Calu3 (cell line): ENCODE measurements at regions of chr10 and their contacts with region 1.

Region 1: GRCh38 chr10:92689663-92690210 is at the start of gene HHEX:
- DNase-seq: peak; percentile 76
- H3K4me3 Mint-ChIP-seq: peak within 1 kb of the TSS; percentile 98
- H3K27ac Mint-ChIP-seq: peak within 1 kb of the TSS; percentile 96
- H3K4me1 Mint-ChIP-seq: peaks cover 7% of the 10 kb centered on the region
- H3K27me3 Mint-ChIP-seq: no peaks in the 10 kb centered on the region
- CTCF ChIP-seq: no peak
- total RNA-seq, gene HHEX: 91.5 and 97.7 TPM in 2 replicates

Region 2: DNA sequence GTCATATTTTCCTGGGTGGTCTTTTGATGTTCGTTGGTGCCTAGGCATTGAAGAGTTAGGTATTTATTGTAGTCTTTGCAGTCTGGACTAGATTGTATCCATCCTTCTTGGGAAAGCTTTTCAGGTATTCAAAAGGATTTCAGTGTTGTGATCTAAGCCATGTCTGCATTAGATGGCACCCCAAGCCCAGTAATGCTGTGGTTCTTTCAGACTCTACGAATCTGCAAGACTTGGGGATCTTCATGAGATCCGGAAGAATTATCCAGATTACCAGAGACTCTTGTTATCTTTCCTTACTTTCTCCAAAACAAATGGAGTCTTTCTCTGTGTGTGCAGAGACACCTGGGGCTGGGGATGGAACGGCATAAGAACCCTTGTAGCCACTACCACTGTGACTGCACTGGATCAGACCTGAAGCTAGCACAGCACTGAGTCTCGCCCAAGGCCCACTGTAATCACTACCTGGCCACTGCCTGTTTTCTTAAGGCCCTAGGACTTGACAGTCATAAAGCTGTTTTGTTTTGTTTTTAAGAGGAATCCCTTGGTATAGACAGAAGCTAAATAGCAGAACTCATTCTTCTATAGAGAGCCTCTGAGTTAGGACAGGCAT is 323.2 kb before region 1 on chr10:
- CTCF ChIA-PET with region 1: no interaction called
- intact Hi-C with region 1: no loop called
- DNase-seq: no peak
- H3K4me3 Mint-ChIP-seq: no peak overlapping the region
- H3K27ac Mint-ChIP-seq: no peak overlapping the region
- H3K4me1 Mint-ChIP-seq: no peaks in the 10 kb centered on the region
- H3K27me3 Mint-ChIP-seq: no peaks in the 10 kb centered on the region
- CTCF ChIP-seq: no peak

Region 3: DNA sequence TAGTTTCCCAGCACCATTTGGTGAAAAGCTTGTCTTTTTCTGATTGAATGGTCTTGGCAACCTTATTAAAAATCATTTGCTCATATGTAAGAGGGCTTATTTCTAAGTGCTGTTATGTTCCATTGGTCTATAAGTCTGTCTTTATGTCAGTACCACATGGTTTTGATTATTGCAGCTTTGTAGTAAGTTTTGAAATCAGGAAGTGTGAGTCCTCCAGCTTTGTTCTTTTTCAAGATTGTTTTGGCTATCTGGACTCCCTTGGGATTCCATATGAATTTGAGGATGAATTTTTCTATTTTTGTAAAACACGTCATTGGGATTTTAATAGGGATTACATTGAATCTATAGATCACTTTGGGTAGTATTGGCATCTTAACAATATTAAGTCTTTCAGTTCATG is 91.4 kb before region 1 on chr10:
- CTCF ChIA-PET with region 1: no interaction called
- intact Hi-C with region 1: loop called (anchors 5 kb)
- DNase-seq: no peak
- H3K4me3 Mint-ChIP-seq: no peak overlapping the region
- H3K27ac Mint-ChIP-seq: no peak overlapping the region
- H3K4me1 Mint-ChIP-seq: peaks cover 40% of the 10 kb centered on the region
- H3K27me3 Mint-ChIP-seq: no peaks in the 10 kb centered on the region
- CTCF ChIP-seq: no peak

Region 4: DNA sequence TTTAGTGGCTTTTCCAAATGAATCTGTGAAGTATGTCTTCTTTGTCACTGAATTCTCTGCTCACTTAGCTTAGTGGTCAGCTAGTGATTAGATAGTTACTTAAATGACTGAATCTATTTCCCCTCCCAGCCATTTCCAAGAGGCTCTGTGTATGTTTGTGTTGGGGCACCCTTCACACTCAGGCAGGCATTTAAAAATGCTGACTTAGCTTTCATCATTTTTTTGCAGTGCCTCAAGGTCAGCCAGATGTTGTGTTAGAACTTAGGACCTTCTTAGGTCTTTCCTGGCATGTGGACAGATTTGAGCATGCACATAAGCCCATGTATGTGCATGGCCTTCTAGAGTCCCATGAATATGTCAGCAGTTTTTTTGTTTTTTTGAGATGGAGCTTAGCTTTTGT is 25.4 kb before region 1 on chr10:
- CTCF ChIA-PET with region 1: no interaction called
- intact Hi-C with region 1: no loop called
- DNase-seq: no peak
- H3K4me3 Mint-ChIP-seq: no peak overlapping the region
- H3K27ac Mint-ChIP-seq: no peak overlapping the region
- H3K4me1 Mint-ChIP-seq: no peaks in the 10 kb centered on the region
- H3K27me3 Mint-ChIP-seq: no peaks in the 10 kb centered on the region
- CTCF ChIP-seq: no peak

Region 5: GRCh38 chr10:92734301-92734700 is 44.6 kb after region 1 on chr10:
- CTCF ChIA-PET with region 1: no interaction called
- intact Hi-C with region 1: no loop called
- DNase-seq: no peak
- H3K4me3 Mint-ChIP-seq: no peak overlapping the region
- H3K27ac Mint-ChIP-seq: no peak overlapping the region
- H3K4me1 Mint-ChIP-seq: peaks cover 8% of the 10 kb centered on the region
- H3K27me3 Mint-ChIP-seq: no peaks in the 10 kb centered on the region
- CTCF ChIP-seq: no peak

Region 6: GRCh38 chr10:93672022-93672678 is 982.4 kb after region 1 on chr10:
- CTCF ChIA-PET with region 1: no interaction called
- intact Hi-C with region 1: no loop called
- DNase-seq: no peak
- H3K4me3 Mint-ChIP-seq: no peak overlapping the region
- H3K27ac Mint-ChIP-seq: no peak overlapping the region
- H3K4me1 Mint-ChIP-seq: no peaks in the 10 kb centered on the region
- H3K27me3 Mint-ChIP-seq: no peaks in the 10 kb centered on the region
- CTCF ChIP-seq: no peak